ENCODE measurements at regions of chr10 and their contacts with region 1.

Region 1: GRCh38 chr10:62594093-62594520 is 210.4 kb upstream of the ADO start:
- DNase-seq: peak in 41 of 42 donors; percentile 27 to 84 (median 68)

Region 2: DNA sequence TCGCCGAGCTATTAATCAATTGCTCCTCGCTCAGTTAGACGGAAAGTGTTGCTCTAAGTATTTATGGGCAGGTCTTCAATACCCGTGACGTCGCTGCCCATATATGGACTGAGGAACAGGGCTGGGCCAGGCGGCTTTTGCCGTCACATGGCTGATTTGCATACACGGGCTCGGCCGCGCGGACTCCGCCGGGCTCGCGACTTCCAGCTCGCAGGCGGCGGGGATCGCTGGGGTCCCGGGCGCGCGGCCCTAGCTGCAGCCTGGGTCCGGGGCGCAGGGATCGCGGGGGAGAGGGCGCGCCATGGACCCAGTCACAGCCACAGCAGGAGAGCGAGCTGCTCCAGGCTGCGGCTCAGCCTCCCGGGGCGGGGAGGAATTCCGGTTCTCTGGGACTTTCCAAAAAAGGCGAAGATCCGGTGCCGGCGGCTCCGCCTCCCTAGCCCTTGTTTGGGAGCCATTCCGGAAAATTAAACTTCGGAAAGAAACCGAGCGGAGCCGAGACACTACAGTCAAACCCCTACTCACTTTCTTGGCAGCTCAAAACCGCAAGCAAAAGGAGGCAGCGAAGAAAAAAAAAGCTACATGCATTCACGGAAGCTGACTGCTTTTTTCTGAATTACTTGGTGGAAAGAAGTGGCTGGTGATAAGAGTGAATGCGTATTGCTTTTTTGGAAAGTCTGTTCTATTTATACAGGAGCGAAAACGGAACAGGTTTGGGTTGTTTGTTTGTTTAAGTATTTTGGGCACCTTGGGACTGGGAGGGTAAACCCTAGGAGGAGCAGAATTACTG is 222.4 kb after region 1 on chr10 and contains the start of gene EGR2:
- intact Hi-C with region 1: loop called (anchors 10 kb)
- DNase-seq: peak; percentile 88 to 99 (median 95)

Region 3: DNA sequence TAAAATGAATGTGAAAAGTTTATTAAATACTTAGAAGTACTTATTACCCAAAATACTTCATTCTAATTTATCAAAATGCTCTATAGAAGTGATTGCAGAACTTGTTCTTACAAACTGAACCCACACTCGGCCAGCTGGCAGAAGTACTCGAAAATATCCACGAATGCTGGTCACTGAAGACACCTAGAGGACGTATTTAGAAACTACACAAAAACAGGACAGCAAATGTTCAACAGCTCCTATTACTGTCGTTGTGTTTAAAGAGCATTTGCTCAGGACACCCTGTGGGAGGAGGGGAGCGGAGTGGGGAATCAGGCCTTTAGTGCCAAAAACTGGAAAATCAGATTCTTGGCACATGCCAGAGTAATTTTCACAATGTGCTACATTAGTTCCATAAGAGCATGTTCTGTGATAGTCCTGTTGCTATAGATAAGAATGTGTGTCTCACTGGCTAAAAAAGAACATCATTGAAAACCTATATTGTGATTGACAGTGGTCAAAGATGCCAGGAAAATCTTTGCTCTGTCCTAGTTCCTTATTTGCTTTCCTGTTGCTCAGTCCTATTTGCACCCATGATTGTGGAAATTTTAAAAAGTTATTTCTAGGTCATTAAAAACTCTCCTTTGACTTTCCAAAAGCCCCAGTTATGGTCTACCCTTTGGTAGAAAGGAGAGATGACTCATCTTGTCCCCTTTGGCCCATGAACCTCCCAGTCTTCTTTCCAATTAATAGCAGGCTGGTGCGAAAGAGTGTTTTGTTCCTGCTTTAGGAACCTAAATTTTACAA is 490.0 kb after region 1 on chr10:
- intact Hi-C with region 1: loop called (anchors 10 kb)
- DNase-seq: peak; percentile 9 to 82 (median 54)

Region 4: GRCh38 chr10:63157845-63158624 is 563.9 kb after region 1 on chr10:
- intact Hi-C with region 1: loop called (anchors 10 kb)
- DNase-seq: peak in 21 of 42 donors; percentile 13 to 75 (median 40)

Measured in head of caudate nucleus (tissue), 42 donors.